Ascending aorta (tissue), 2 donors: ENCODE measurements at regions of chr20 and their contacts with region 1.

Region 1: DNA sequence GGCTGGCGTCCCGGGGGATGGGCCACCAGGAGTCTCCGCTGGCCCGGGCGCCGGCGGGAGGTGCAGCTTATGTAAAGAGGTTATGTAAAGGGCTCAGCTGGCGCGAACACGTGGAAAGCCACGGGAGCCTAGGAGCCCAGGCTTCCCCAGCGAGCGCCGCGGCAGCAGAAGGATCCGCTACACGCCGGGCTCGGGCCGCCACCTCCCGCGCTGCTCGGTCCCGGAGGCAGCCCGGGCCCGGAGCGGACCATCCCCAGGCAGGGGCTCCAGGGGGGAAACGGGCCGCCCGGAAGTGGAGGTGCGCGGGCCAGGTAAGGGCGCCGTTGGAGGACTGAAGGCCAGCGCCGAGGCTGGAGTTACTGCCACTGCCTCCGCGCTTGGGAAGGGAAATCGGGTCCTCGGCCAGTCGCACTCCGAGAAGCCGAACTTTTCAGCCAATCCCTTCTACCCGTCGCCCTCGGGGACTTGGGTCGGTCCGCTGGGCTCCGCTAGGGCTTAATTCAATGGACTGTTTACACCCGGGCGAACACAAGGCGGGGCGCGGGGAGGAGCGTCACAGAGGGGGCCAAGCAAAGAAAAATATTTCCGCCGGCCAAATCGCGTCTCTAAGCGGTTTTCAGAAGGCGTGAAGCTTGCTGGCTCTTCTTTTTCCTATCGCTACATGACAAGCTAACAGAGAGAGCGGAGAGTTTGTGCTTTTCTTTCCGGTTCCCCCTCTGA is 398 bp downstream of the STK35 start:
- DNase-seq: peak; percentile 68 to 95
- H3K4me3 ChIP-seq: peak overlapping the region; percentile 84 to 96
- H3K27ac ChIP-seq: peak overlapping the region; percentile 99
- H3K4me1 ChIP-seq: peaks cover 0 to 25% of the 10 kb centered on the region in 2 donors
- H3K27me3 ChIP-seq: no peaks in the 10 kb centered on the region
- CTCF ChIP-seq: no peak

Region 2: GRCh38 chr20:543369-544152 is 1558.5 kb before region 1 on chr20 and contains the start of gene CSNK2A1:
- intact Hi-C with region 1: loop called (anchors 10 kb)
- DNase-seq: peak; percentile 73 to 96
- H3K4me3 ChIP-seq: peak within 1 kb of the TSS; percentile 78 to 93
- H3K27ac ChIP-seq: peak within 1 kb of the TSS; percentile 84 to 89
- H3K4me1 ChIP-seq: peaks cover 5 to 25% of the 10 kb centered on the region in 2 donors
- H3K27me3 ChIP-seq: no peaks in the 10 kb centered on the region
- CTCF ChIP-seq: no peak
- total RNA-seq, gene CSNK2A1: 74.1 TPM

Region 3: GRCh38 chr20:1325173-1326030 is 776.6 kb before region 1 on chr20:
- intact Hi-C with region 1: loop called (anchors 5 kb)
- DNase-seq: peak; percentile 90 to 99
- H3K4me3 ChIP-seq: peak overlapping the region; percentile 88
- H3K27ac ChIP-seq: peak overlapping the region; percentile 98 to 99
- H3K4me1 ChIP-seq: peaks cover 0 to 33% of the 10 kb centered on the region in 2 donors
- H3K27me3 ChIP-seq: no peaks in the 10 kb centered on the region
- CTCF ChIP-seq: peak in 2 of 3 experiments; percentile 24 to 30

Region 4: DNA sequence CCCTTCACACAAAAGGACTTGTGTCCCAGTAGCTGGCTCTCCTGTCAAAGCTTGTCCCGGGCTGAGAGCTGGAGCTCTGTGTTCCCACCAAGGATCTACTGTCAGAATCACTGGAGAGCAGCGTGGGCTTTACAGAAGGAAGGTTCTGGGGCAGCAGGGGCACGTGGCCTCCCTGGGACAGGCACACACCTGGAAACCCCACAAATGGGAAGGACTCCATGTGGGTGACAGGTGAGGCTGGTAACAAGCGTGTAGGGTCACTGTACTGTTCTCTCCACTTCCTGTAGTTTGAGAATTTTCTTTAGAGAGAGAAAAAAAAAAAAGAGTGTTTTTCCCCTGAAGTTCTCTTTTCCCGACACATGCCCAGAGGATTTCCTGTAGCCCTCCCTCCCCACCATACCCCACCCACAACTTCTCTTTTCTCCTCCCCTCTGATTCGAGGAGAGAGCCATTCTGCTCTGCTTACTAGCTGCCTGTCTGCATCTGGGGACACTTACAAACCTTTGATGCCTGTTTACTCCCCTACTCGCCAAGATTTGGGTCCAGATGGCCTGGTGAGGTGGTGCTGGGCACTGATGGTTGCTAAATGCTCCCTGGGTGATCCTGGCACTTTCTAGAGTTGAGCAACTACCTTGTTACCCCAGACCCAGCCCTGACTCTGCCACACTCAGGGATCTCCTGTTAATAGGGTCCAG is 291.0 kb before region 1 on chr20:
- intact Hi-C with region 1: loop called (anchors 2 kb)
- DNase-seq: peak in 1 of 2 donors; percentile 69
- H3K4me3 ChIP-seq: no peak overlapping the region
- H3K27ac ChIP-seq: peak overlapping the region; percentile 75 to 76
- H3K4me1 ChIP-seq: peaks cover 46 to 65% of the 10 kb centered on the region in 2 donors
- H3K27me3 ChIP-seq: no peaks in the 10 kb centered on the region
- CTCF ChIP-seq: no peak

Region 5: DNA sequence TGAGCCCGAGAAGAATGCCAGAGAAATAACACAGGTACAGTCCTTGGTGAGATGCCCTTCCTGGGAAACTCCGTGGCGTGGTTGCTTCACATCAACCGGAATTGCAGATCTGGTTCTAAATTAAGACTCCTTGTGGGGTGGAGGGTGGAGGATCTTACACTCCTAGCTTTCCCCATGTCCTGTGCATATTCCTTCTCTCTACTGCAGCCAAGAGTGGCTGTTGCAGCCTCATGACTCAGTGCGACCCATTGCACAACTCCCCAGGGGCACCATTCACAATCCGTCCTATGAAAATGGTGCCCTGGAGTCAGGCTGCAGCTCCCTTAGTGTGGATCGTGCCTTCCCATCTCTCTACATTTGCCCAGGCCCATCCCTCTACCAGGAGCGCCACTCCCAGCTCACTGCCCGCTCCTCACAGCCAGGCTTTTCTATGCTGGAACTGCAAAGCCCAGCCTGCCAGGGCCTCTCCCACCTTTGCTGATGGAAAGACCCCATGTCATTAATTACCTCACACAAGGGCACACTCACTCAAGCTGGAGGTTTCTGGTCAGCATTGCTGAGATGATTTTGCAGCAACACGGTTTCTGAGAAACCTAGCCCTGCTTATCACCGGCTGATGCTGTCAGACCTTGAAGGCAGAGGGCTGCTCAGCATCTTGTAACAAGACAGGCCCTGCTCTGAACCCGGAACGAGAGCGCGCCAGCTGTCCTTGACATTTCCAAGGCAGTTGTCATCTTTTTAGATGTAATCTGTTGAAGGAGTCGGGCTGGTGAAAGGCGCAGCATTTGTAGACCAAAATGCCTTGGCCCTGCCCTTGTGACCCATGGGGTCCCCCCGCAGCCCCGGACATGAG is 167.1 kb before region 1 on chr20:
- intact Hi-C with region 1: loop called (anchors 10 kb)
- DNase-seq: peak; percentile 43 to 93
- H3K4me3 ChIP-seq: no peak overlapping the region
- H3K27ac ChIP-seq: peak overlapping the region; percentile 32 to 68
- H3K4me1 ChIP-seq: peaks cover 0 to 8% of the 10 kb centered on the region in 2 donors
- H3K27me3 ChIP-seq: no peaks in the 10 kb centered on the region
- CTCF ChIP-seq: no peak

Region 6: GRCh38 chr20:2508631-2509467 is 406.8 kb after region 1 on chr20 and contains the start of gene ZNF343:
- intact Hi-C with region 1: loop called (anchors 5 kb)
- DNase-seq: peak in 1 of 2 donors; percentile 88
- H3K4me3 ChIP-seq: peak within 1 kb of the TSS; percentile 74 to 80
- H3K27ac ChIP-seq: peak within 1 kb of the TSS; percentile 88 to 90
- H3K4me1 ChIP-seq: peaks cover 0 to 13% of the 10 kb centered on the region in 2 donors
- H3K27me3 ChIP-seq: no peaks in the 10 kb centered on the region
- CTCF ChIP-seq: no peak
- total RNA-seq, gene ZNF343: 0.64 TPM